ENCODE measurements at regions of chr5 and their contacts with region 1.

Region 1: GRCh38 chr5:150523472-150524350 is 15.8 kb downstream of the NDST1 start:
- DNase-seq: peak; percentile 59
- H3K4me3 ChIP-seq: no peak overlapping the region
- H3K27ac ChIP-seq: peak overlapping the region; percentile 81
- H3K4me1 ChIP-seq: peaks cover 10% of the 10 kb centered on the region
- H3K27me3 ChIP-seq: no peaks in the 10 kb centered on the region
- CTCF ChIP-seq: no peak

Region 2: DNA sequence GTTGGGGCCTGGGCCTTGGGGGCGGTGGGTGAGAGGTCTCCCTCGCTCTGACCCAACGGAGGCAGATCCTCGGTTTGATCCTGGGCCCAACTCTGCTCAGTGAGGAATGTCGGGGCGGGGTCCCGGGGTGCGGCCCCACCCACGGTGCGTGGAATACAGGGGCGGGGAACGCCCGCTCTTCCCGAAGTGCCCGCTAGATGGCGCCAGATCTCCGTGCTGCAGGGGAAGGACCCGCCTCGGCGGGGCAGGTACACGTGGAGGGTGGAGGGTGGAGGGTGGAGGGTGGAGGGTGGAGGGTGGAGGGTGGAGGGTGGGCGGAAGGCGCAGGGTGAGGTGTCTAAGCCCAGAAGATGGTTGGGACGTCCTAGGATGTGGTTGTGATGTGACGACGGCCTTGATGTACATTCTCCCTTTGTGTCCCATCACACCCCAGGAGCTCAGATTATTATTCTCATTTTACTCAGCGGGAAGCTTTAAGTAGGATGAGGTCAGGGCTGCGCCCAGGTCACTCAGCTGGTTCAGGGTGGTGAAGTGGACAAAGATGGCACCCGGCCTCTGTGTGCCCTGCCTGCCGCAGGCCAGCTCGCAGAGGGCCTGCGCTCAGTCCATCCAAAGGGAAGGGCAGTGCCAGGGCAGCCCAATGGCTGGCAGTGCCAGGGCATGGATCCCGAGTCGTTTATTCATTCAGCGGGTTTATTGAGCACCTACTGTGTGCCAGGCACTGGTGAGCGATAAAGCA is 64.7 kb before region 1 on chr5:
- intact Hi-C with region 1: loop called (anchors 5 kb)
- DNase-seq: peak; percentile 89
- H3K4me3 ChIP-seq: no peak overlapping the region
- H3K27ac ChIP-seq: no peak overlapping the region
- H3K4me1 ChIP-seq: no peaks in the 10 kb centered on the region
- H3K27me3 ChIP-seq: no peaks in the 10 kb centered on the region
- CTCF ChIP-seq: peak; percentile 76

Region 3: GRCh38 chr5:150486402-150487198 is 37.1 kb before region 1 on chr5:
- intact Hi-C with region 1: loop called (anchors 5 kb)
- DNase-seq: peak; percentile 68
- H3K4me3 ChIP-seq: peak overlapping the region; percentile 93
- H3K27ac ChIP-seq: peak overlapping the region; percentile 89
- H3K4me1 ChIP-seq: peaks cover 22% of the 10 kb centered on the region
- H3K27me3 ChIP-seq: no peaks in the 10 kb centered on the region
- CTCF ChIP-seq: no peak